ENCODE measurements at regions of chr7 and their contacts with region 1.

Region 1: DNA sequence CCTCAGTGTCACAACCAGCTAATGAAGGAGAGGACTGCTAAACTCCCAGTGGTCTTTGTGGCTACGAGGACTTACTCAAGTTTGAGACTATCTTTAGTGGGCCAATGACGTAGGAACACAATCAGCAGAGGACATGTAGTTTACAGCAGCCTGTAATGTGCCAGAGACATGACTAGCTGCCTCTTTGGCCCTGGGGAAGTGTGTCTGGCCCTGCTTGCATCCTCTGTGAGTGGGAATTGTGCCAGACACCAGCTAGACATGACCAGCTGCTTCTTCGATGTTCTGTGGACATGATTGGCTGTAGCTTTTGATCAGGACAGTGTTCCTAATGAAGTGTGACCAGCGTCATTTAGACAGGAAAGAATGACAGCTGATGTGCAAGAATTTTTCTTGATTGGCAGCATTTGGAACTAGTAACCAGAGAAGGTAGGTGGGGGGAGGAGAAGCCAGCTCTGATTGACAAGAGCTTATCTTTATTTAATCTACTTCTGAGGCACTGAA is 141.7 kb downstream of the AUTS2 start:
- DNase-seq: peak; percentile 91
- H3K4me3 ChIP-seq: no peak overlapping the region
- H3K27ac ChIP-seq: peak overlapping the region; percentile 66
- H3K4me1 ChIP-seq: peaks cover 38% of the 10 kb centered on the region
- H3K27me3 ChIP-seq: no peaks in the 10 kb centered on the region
- CTCF ChIP-seq: no peak

Region 2: GRCh38 chr7:69906283-69906995 is 166.5 kb after region 1 on chr7:
- CTCF ChIA-PET with region 1: no interaction called
- POLR2A ChIA-PET with region 1: no interaction called
- intact Hi-C with region 1: no loop called
- DNase-seq: peak; percentile 38
- H3K4me3 ChIP-seq: no peak overlapping the region
- H3K27ac ChIP-seq: no peak overlapping the region
- H3K4me1 ChIP-seq: peaks cover 39% of the 10 kb centered on the region
- H3K27me3 ChIP-seq: no peaks in the 10 kb centered on the region
- CTCF ChIP-seq: no peak

Region 3: GRCh38 chr7:70092314-70093204 is 352.6 kb after region 1 on chr7:
- CTCF ChIA-PET with region 1: no interaction called
- POLR2A ChIA-PET with region 1: interaction called, 10 read pairs
- intact Hi-C with region 1: no loop called
- DNase-seq: peak; percentile 86
- H3K4me3 ChIP-seq: peak overlapping the region; percentile 21
- H3K27ac ChIP-seq: no peak overlapping the region
- H3K4me1 ChIP-seq: peaks cover 49% of the 10 kb centered on the region
- H3K27me3 ChIP-seq: peaks cover 43% of the 10 kb centered on the region
- CTCF ChIP-seq: no peak

Measured in A673 (cell line).